OCI-LY7 (cell line): ENCODE measurements at regions of chr10 and their contacts with region 1.

Region 1: DNA sequence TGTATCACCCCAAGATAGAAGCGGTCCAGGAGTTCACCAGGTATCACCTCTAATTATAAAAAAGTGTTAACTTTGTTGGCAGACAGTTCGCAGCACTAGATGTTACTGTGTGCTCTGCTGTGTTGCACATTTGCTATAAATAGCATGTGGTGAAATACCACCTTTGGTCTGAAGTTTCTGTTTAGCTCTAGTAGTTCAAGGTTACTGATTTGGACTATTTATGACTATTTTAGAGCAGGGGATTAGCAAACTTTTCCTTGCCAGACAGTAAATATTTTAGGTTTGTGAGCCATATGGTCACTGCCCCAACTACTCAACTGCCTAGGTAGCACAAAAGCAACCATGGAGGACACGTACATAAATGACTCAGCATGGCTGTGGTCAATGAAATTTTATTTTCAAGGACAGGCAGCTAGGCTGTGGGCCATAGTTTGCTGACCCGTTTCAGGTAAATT is 16.5 kb downstream of the DENND10 start:
- DNase-seq: peak; percentile 55
- H3K4me3 ChIP-seq: peak overlapping the region; percentile 39
- H3K27ac ChIP-seq: peak overlapping the region; percentile 75
- H3K4me1 ChIP-seq: peaks cover 19% of the 10 kb centered on the region
- CTCF ChIP-seq: no peak

Region 2: DNA sequence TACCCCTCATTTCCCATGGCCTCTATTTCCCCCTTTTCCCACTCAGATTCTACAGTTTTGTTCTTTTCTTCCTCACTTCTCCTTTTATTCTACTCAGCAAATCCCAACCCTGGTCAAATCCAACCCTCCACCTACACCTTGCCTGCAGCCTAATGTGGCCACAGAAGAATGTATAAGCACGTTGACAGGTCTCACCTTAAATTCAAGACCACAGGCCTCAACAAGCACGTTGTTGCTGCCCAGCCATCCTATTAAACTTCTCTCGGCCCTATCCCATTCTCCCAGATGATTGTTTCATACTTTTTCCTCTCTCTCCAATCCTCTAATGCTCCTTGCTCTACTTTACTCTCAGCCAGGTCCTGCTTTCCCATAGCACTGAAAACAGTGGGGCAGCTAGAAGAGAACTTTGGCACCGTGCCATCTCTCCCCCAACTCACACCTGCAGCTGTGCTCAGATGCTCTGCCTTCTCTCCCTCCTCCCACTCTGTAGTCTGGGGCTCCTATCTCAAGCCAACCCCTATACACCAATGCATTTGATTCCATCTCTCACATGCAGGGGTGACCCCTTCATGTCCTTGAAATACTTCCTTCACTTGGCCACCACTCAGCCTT is 33.1 kb before region 1 on chr10:
- CTCF ChIA-PET with region 1: no interaction called
- POLR2A ChIA-PET with region 1: interaction called, 4 read pairs
- intact Hi-C with region 1: loop called (anchors 2 kb)
- DNase-seq: peak; percentile 84
- H3K4me3 ChIP-seq: peak overlapping the region; percentile 4
- H3K27ac ChIP-seq: peak overlapping the region; percentile 67
- H3K4me1 ChIP-seq: peaks cover 39% of the 10 kb centered on the region
- CTCF ChIP-seq: no peak

Region 3: GRCh38 chr10:119139464-119140067 is 19.1 kb after region 1 on chr10:
- CTCF ChIA-PET with region 1: no interaction called
- POLR2A ChIA-PET with region 1: no interaction called
- intact Hi-C with region 1: no loop called
- DNase-seq: peak; percentile 46
- H3K4me3 ChIP-seq: no peak overlapping the region
- H3K27ac ChIP-seq: no peak overlapping the region
- H3K4me1 ChIP-seq: peaks cover 3% of the 10 kb centered on the region
- CTCF ChIP-seq: peak; percentile 69